GM13976 (cell line): ENCODE measurements at regions of chr9 and their contacts with region 1.

Region 1: GRCh38 chr9:136493567-136493971 is 10.7 kb upstream of the SEC16A start:
- DNase-seq: no peak
- CTCF ChIP-seq: no peak

Region 2: GRCh38 chr9:136629752-136630661 is 136.4 kb after region 1 on chr9:
- in situ Hi-C with region 1: loop called (anchors 5 kb)
- DNase-seq: peak; percentile 85
- CTCF ChIP-seq: peak; percentile 78

Region 3: DNA sequence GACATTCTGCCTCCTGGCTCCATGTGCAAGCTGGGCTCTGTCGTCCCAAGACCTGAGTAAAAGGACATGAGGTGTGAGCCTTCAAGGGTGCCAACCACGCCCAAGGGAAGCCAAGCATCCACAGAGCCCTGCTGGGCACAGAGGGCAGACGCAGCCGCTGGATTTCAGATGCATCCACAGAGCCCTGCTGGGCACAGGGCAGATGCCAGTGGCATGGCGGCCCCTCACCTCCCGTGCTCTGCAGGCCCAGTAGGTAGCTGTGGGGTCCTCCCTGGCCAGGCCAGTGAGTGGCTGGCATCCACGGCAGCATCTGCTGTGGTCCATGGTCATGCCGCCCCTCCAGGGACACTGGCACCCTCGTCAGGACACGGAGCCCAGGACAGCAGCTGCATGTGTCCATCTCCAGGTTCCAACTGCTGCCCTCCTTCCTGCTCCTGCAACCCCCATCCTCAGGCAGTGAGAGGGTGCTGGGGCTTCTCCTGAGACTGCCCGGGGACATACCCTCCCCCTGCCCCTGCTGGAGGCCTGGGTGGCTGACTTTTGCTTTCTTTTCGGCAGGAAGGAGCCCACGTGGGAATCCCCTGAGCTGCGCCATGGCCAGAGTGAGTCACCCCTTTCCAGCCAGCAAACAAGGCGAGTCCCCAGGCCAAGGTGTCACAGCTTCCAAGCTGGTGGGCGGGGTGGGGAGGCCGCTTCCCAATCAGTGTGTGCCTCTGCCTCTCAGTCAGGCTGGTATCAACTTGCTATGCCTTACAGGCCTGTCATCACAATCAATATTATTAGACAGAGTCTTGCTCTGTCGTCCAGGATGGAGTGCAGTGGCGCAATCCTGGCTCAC is 388.8 kb after region 1 on chr9:
- in situ Hi-C with region 1: no loop called
- DNase-seq: peak; percentile 91
- CTCF ChIP-seq: no peak

Region 4: GRCh38 chr9:137200311-137201204 is 707.0 kb after region 1 on chr9 and contains the start of gene TPRN:
- in situ Hi-C with region 1: no loop called
- DNase-seq: peak; percentile 100
- CTCF ChIP-seq: no peak